A549 (cell line): ENCODE measurements at regions of chr17 and their contacts with region 1.

Region 1: GRCh38 chr17:7589204-7589868 is 558 bp downstream of the SOX15 start:
- DNase-seq: peak in 1 of 2 experiments; percentile 72
- ATAC-seq: peak; percentile 22 to 65; a peak in 3 of 6 replicates
- H3K4me3 ChIP-seq: no peak overlapping the region
- H3K27ac ChIP-seq: peak overlapping the region in 1 of 2 experiments; percentile 78; a peak in 2 of 6 replicates
- H3K4me1 ChIP-seq: peaks cover 36% of the 10 kb centered on the region
- CTCF ChIP-seq: peak; percentile 46
- EP300 ChIP-seq: no peak
- POLR2A ChIP-seq: no peak
- RAD21 ChIP-seq: peak; percentile 44 to 45; a peak in 3 of 5 replicates

Region 2: DNA sequence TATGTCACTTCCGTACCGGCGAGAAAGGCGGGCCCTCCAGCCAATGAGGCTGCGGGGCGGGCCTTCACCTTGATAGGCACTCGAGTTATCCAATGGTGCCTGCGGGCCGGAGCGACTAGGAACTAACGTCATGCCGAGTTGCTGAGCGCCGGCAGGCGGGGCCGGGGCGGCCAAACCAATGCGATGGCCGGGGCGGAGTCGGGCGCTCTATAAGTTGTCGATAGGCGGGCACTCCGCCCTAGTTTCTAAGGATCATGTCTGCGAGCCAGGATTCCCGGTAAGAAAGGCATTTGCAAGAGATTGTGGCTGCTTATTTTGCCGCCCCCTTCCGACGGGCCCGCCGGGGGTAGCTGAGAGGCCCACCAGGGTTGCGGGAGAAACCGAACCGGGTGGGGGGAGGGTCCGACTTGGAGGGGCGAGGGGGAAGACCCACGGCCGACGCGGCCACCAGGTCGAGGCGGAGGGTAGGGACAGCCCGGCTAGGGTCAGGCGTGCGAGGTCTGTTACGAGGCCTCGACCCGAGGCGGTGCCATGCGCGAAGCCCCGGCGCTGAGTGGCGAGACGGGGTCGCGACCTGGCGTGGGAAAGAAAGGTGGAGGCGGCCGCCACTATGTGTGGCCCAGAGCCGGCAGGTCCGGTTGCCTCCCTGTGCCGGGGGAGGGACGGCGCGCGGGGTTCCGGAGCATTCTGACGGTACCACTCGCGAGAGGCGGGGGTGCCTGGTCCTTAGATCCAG is 16.6 kb before region 1 on chr17:
- CTCF ChIA-PET with region 1: interaction called, 38 read pairs
- POLR2A ChIA-PET with region 1: interaction called, 34 read pairs
- DNase-seq: peak; percentile 100
- ATAC-seq: peak in 1 of 2 experiments; percentile 1; a peak in 5 of 6 replicates
- H3K4me3 ChIP-seq: peak overlapping the region; percentile 96
- H3K27ac ChIP-seq: peak overlapping the region; percentile 96 to 97
- H3K4me1 ChIP-seq: peaks cover 40% of the 10 kb centered on the region
- CTCF ChIP-seq: no peak
- EP300 ChIP-seq: no peak; a peak in 1 of 5 replicates
- POLR2A ChIP-seq: peak; percentile 98
- RAD21 ChIP-seq: no peak; a peak in 1 of 5 replicates

Region 3: DNA sequence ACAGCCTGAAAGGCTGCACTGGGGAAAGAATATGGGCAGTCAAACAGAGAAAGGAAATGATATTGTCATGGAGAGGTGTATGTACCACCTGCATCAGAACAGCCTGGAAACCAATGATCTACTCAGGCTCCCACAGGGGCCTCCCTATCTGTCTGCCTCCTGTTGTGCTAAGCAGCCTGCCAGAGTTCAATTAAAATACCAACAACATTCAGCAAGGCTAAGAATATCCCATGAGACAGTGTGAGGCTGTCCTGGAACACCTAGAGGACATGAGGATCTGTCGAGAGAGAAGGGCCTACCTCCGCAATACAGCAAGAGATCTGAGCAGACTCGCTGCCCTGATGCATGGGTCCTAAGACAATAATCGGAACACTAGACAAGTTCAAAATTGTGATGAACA is 16.9 kb after region 1 on chr17:
- CTCF ChIA-PET with region 1: interaction called, 40 read pairs
- POLR2A ChIA-PET with region 1: interaction called, 5 read pairs
- DNase-seq: no peak
- ATAC-seq: no peak
- H3K4me3 ChIP-seq: no peak overlapping the region
- H3K27ac ChIP-seq: no peak overlapping the region
- H3K4me1 ChIP-seq: peaks cover 6% of the 10 kb centered on the region; the same call in 2 of the 3 replicates
- CTCF ChIP-seq: no peak
- EP300 ChIP-seq: no peak
- POLR2A ChIP-seq: no peak
- RAD21 ChIP-seq: no peak

Region 4: GRCh38 chr17:7614422-7615264 is 25.3 kb after region 1 on chr17 and contains the start of gene FXR2:
- CTCF ChIA-PET with region 1: interaction called, 46 read pairs
- POLR2A ChIA-PET with region 1: interaction called, 15 read pairs
- DNase-seq: peak; percentile 99 to 100
- ATAC-seq: peak; percentile 91 to 96
- H3K4me3 ChIP-seq: peak within 1 kb of the TSS; percentile 84
- H3K27ac ChIP-seq: peak within 1 kb of the TSS; percentile 92 to 95
- H3K4me1 ChIP-seq: peaks cover 29% of the 10 kb centered on the region
- CTCF ChIP-seq: peak; percentile 58
- EP300 ChIP-seq: no peak
- POLR2A ChIP-seq: peak; percentile 77
- RAD21 ChIP-seq: 0 out of 5 replicates have a peak, but pooled peaks have one; percentile 10 to 29
- polyA plus RNA-seq, gene FXR2: 40.7 and 45.3 TPM in 2 replicates

Region 5: DNA sequence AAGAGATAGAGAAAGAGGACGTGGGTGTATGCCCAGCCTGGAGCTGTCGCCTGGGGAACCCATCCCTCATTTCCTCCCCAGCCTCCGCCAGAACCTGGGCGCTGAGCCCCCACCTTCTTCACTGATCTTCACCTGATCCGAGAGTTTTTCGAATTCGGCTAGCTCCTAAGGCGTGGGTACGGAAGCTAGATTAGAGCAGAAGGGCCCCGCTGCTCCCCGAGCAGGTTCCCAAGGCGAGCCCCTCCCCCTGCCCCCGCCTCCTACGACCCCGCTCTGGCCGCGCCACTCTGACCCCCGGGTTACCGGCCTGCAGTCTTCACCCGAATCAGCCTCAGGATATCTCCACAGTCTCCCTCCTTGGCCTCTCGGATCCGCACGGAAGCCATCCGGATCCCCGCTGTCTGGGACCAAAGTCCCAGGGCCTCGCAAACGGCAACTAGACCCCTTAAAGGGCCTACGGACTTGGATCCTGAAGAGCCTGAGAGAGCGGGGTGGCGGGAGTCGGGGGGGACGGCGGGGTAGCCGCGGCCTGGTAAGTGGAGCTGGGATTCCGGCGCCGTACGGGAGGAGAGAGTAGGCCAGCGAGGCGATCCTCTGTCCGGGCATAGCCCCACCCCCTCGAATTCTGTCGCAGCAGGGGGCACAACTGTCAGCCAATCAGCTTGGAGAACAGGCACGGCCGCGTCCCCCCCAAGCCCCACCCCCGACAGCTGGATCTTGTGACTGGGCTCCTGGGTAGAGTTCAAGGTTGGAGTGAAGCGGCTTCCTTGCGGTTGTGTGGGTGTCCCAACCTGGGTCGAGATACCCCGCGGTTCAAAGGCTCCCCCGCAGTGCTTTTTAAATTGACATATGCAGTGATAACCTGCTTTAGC is 38.1 kb after region 1 on chr17 and contains the start of gene SAT2:
- CTCF ChIA-PET with region 1: interaction called, 18 read pairs
- POLR2A ChIA-PET with region 1: interaction called, 10 read pairs
- DNase-seq: peak; percentile 94 to 99
- ATAC-seq: peak; percentile 91 to 94
- H3K4me3 ChIP-seq: peak within 1 kb of the TSS; percentile 85
- H3K27ac ChIP-seq: peak within 1 kb of the TSS; percentile 93 to 94
- H3K4me1 ChIP-seq: peaks cover 10% of the 10 kb centered on the region; the same call in 2 of the 3 replicates
- CTCF ChIP-seq: no peak
- EP300 ChIP-seq: no peak
- POLR2A ChIP-seq: peak; percentile 77
- RAD21 ChIP-seq: 0 out of 5 replicates have a peak, but pooled peaks of 1 of the 2 experiments have one; percentile 17
- polyA plus RNA-seq, gene SAT2: 38.1 and 44.4 TPM in 2 replicates